BJ (cell line): ENCODE measurements at regions of chr12 and their contacts with region 1.

Region 1: GRCh38 chr12:69254046-69254445 is 14.7 kb downstream of the CPSF6 start:
- DNase-seq: no peak
- H3K4me3 ChIP-seq: no peak overlapping the region
- H3K27me3 ChIP-seq: no peaks in the 10 kb centered on the region
- CTCF ChIP-seq: peak; percentile 60

Region 2: GRCh38 chr12:69266036-69266635 is 12.1 kb after region 1 on chr12:
- CTCF ChIA-PET with region 1: interaction called, 12 read pairs
- POLR2A ChIA-PET with region 1: no interaction called
- DNase-seq: no peak
- H3K4me3 ChIP-seq: no peak overlapping the region
- H3K27me3 ChIP-seq: no peaks in the 10 kb centered on the region
- CTCF ChIP-seq: no peak

Region 3: DNA sequence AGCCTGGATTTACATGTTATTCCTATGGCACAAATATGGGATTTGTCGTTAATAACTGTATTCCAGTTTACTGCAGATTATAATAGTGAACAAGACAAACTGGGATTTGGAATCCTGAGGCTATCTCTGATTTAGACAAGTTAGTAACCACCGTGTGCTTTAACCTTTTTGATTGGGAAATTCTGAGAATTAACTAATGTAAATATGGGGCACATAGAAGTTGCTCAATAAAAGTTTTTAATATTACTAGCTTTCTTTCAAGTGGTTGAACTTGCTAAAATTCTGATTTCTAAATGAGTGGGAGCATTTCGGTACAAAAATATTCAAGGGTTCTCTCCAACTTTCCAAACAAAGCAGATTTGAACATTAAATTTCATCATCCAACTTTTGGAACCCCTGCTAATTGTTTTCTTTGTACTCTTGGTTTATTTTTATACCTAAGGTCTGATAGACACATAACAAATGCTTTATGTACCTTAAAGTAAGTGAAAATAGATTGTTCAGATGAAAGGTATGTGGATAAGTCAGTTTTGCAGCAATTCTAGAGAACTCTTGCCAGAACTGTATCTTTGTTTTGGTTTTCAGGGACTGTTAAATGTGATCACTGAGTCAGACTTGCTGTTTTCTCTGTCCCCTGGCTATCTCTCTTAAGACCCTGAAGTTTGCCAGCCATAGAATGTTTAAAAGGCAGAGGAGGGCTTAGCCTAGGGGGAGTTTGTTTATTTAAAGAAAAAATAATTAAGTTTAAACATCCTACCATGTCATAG is 273.6 kb after region 1 on chr12:
- CTCF ChIA-PET with region 1: no interaction called
- POLR2A ChIA-PET with region 1: no interaction called
- DNase-seq: peak; percentile 38
- H3K4me3 ChIP-seq: no peak overlapping the region
- H3K27me3 ChIP-seq: no peaks in the 10 kb centered on the region
- CTCF ChIP-seq: no peak